CD8-positive, alpha-beta T cell (primary cell): ENCODE measurements at regions of chr4 and their contacts with region 1.

Region 1: GRCh38 chr4:82123934-82124333 is 249.9 kb downstream of the HNRNPD start:
- DNase-seq: peak in 3 of 9 experiments; percentile 32 to 43 (median 38)
- ATAC-seq: peak; percentile 54
- H3K4me3 ChIP-seq: no peak overlapping the region
- H3K4me3 Mint-ChIP-seq: no peak overlapping the region
- H3K27ac ChIP-seq: no peak overlapping the region
- H3K27ac Mint-ChIP-seq: no peak overlapping the region
- H3K4me1 ChIP-seq: no peaks in the 10 kb centered on the region
- H3K4me1 Mint-ChIP-seq: peaks cover 6% of the 10 kb centered on the region
- H3K27me3 ChIP-seq: no peaks in the 10 kb centered on the region
- H3K27me3 Mint-ChIP-seq: no peaks in the 10 kb centered on the region
- CTCF ChIP-seq: no peak

Region 2: GRCh38 chr4:81549984-81550383 is 574.0 kb before region 1 on chr4:
- CTCF ChIA-PET with region 1: no interaction called
- POLR2A ChIA-PET with region 1: no interaction called
- intact Hi-C with region 1: no loop called
- DNase-seq: no peak
- ATAC-seq: no peak
- H3K4me3 ChIP-seq: no peak overlapping the region
- H3K4me3 Mint-ChIP-seq: no peak overlapping the region
- H3K27ac ChIP-seq: no peak overlapping the region
- H3K27ac Mint-ChIP-seq: no peak overlapping the region
- H3K4me1 ChIP-seq: no peaks in the 10 kb centered on the region
- H3K4me1 Mint-ChIP-seq: no peaks in the 10 kb centered on the region
- H3K27me3 ChIP-seq: no peaks in the 10 kb centered on the region
- H3K27me3 Mint-ChIP-seq: no peaks in the 10 kb centered on the region
- CTCF ChIP-seq: no peak

Region 3: GRCh38 chr4:82201805-82202641 is 78.1 kb after region 1 on chr4:
- CTCF ChIA-PET with region 1: interaction called, 25 read pairs
- POLR2A ChIA-PET with region 1: no interaction called
- intact Hi-C with region 1: loop called (anchors 1 to 2 kb)
- DNase-seq: peak in 7 of 9 experiments; percentile 6 to 64 (median 37)
- ATAC-seq: peak; percentile 34
- H3K4me3 ChIP-seq: no peak overlapping the region
- H3K4me3 Mint-ChIP-seq: no peak overlapping the region
- H3K27ac ChIP-seq: no peak overlapping the region
- H3K27ac Mint-ChIP-seq: no peak overlapping the region
- H3K4me1 ChIP-seq: no peaks in the 10 kb centered on the region
- H3K4me1 Mint-ChIP-seq: peaks cover 5% of the 10 kb centered on the region
- H3K27me3 ChIP-seq: peaks cover 0 to 3% of the 10 kb centered on the region in 2 experiments
- H3K27me3 Mint-ChIP-seq: peaks cover 3% of the 10 kb centered on the region
- CTCF ChIP-seq: peak; percentile 75

Region 4: GRCh38 chr4:82360298-82361177 is 236.6 kb after region 1 on chr4:
- CTCF ChIA-PET with region 1: no interaction called
- POLR2A ChIA-PET with region 1: no interaction called
- intact Hi-C with region 1: loop called in 1 of 2 experiments (anchors 5 kb)
- DNase-seq: peak in 2 of 9 experiments; percentile 51 to 59
- ATAC-seq: peak; percentile 75
- H3K4me3 ChIP-seq: no peak overlapping the region
- H3K4me3 Mint-ChIP-seq: peak overlapping the region; percentile 1
- H3K27ac ChIP-seq: peak overlapping the region in 1 of 2 experiments; percentile 21
- H3K27ac Mint-ChIP-seq: peak overlapping the region; percentile 15
- H3K4me1 ChIP-seq: peaks cover 92% of the 10 kb centered on the region
- H3K4me1 Mint-ChIP-seq: peaks cover 91% of the 10 kb centered on the region
- H3K27me3 ChIP-seq: no peaks in the 10 kb centered on the region
- H3K27me3 Mint-ChIP-seq: no peaks in the 10 kb centered on the region
- CTCF ChIP-seq: peak; percentile 56

Region 5: DNA sequence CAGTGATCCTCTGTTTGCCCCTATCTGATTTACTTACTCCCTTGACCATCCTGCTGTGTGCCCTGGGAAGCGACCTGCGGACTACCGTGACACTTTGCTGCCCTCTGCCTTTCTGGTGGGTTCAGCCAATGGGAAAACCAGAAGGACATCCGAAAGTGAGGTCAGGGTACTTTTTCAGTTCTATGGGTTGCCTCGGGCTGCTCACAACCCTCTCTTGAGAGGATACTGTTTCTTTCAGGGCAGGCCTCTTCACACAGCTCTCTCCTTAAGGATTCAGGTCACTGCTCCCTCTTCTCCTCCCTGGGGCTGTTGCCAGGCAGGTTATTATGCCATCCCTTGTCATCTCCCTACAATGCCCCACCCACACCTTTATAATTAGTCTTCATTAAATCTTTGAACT is 969.2 kb after region 1 on chr4:
- CTCF ChIA-PET with region 1: no interaction called
- POLR2A ChIA-PET with region 1: no interaction called
- intact Hi-C with region 1: no loop called
- DNase-seq: no peak
- ATAC-seq: no peak
- H3K4me3 ChIP-seq: no peak overlapping the region
- H3K4me3 Mint-ChIP-seq: no peak overlapping the region
- H3K27ac ChIP-seq: peak overlapping the region in 1 of 2 experiments; percentile 31
- H3K27ac Mint-ChIP-seq: peak overlapping the region; percentile 80
- H3K4me1 ChIP-seq: peaks cover 26% of the 10 kb centered on the region
- H3K4me1 Mint-ChIP-seq: peaks cover 53% of the 10 kb centered on the region
- H3K27me3 ChIP-seq: no peaks in the 10 kb centered on the region
- H3K27me3 Mint-ChIP-seq: no peaks in the 10 kb centered on the region
- CTCF ChIP-seq: no peak